K562 (cell line): ENCODE measurements at regions of chr17 and their contacts with region 1.

Region 1: DNA sequence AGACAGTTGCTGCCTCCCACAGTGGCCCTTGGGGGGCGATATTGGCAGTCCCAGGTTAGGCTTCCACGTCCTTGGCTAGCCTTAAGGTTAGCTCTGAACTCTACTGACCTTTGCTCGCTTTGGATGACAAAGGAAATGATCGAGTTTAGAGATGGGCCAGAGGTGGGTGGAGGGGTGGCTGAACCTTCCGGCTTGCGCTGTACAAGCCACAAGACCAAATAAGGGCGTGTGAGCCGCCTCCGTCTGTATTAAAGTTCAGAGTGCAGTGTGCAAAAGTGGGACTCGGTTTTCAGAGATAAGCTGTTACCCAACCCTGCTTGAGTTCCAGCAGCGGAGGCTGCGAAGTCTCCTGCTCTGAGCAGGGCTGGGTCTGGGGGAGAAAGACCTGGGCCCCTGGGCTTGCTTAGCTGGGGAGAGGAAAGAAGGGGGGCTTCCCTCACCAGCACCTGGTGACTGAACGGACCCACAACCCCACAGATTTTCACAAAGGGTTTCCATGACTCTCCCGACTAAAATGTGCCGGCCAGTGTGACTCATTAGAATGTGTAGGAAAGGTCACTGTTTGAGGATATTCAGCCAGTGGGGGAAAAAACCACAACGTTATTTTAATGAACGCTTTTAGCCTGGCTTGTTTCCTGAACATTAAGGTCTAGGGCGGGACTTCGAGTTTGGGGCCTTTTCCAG is 67.2 kb downstream of the CENPV start:
- DNase-seq: peak; percentile 85 to 95 (median 88)
- ATAC-seq: peak; percentile 96
- H3K4me3 ChIP-seq: peak overlapping the region; percentile 13; the same call in 1 of the 2 replicates
- H3K27ac ChIP-seq: peak overlapping the region; percentile 98
- H3K4me1 ChIP-seq: peaks cover 9 to 47% of the 10 kb centered on the region in 2 experiments
- H3K27me3 ChIP-seq: no peaks in the 10 kb centered on the region
- CTCF ChIP-seq: peak; percentile 78 to 80 (median 79)
- EP300 ChIP-seq: peak; percentile 73
- POLR2A ChIP-seq: peak; percentile 87
- RAD21 ChIP-seq: peak; percentile 51 to 74

Region 2: GRCh38 chr17:16215273-16215964 is 70.7 kb before region 1 on chr17 and contains the start of gene NCOR1:
- CTCF ChIA-PET with region 1: no interaction called
- POLR2A ChIA-PET with region 1: no interaction called
- in situ Hi-C with region 1: no loop called
- intact Hi-C with region 1: loop called (anchors 5 kb)
- DNase-seq: peak; percentile 71 to 92 (median 76)
- ATAC-seq: peak; percentile 90
- H3K4me3 ChIP-seq: peak within 1 kb of the TSS; percentile 97
- H3K27ac ChIP-seq: peak within 1 kb of the TSS; percentile 97
- H3K4me1 ChIP-seq: peaks cover 0 to 12% of the 10 kb centered on the region in 2 experiments; a peak in 2 of 5 replicates
- H3K27me3 ChIP-seq: no peaks in the 10 kb centered on the region
- CTCF ChIP-seq: peak; percentile 19 to 45 (median 43); a peak in 4 of 6 replicates
- EP300 ChIP-seq: no peak
- POLR2A ChIP-seq: peak; percentile 90
- RAD21 ChIP-seq: peak in 1 of 2 experiments; percentile 27; a peak in 2 of 4 replicates
- polyA plus RNA-seq, gene NCOR1: 20.2 to 35.3 TPM

Region 3: GRCh38 chr17:16353317-16354174 is 67.4 kb after region 1 on chr17 and contains the start of gene CENPV:
- CTCF ChIA-PET with region 1: no interaction called
- POLR2A ChIA-PET with region 1: interaction called, 3 read pairs
- in situ Hi-C with region 1: no loop called
- intact Hi-C with region 1: loop called (anchors 5 kb)
- DNase-seq: peak; percentile 65 to 82 (median 80)
- ATAC-seq: peak; percentile 74
- H3K4me3 ChIP-seq: peak within 1 kb of the TSS; percentile 93
- H3K27ac ChIP-seq: peak within 1 kb of the TSS; percentile 90
- H3K4me1 ChIP-seq: peaks cover 0 to 15% of the 10 kb centered on the region in 2 experiments; a peak in 4 of 5 replicates
- H3K27me3 ChIP-seq: no peaks in the 10 kb centered on the region
- CTCF ChIP-seq: peak in 2 of 3 experiments; percentile 28 to 47; a peak in 2 of 6 replicates
- EP300 ChIP-seq: no peak
- POLR2A ChIP-seq: no peak
- RAD21 ChIP-seq: no peak
- polyA plus RNA-seq, gene CENPV: 17.8 to 25.8 TPM

Region 4: GRCh38 chr17:16506188-16506587 is 220.1 kb after region 1 on chr17:
- CTCF ChIA-PET with region 1: no interaction called
- POLR2A ChIA-PET with region 1: no interaction called
- in situ Hi-C with region 1: no loop called
- intact Hi-C with region 1: no loop called
- DNase-seq: no peak
- ATAC-seq: no peak
- H3K4me3 ChIP-seq: no peak overlapping the region
- H3K27ac ChIP-seq: no peak overlapping the region
- H3K4me1 ChIP-seq: no peaks in the 10 kb centered on the region
- H3K27me3 ChIP-seq: peaks cover 3 to 34% of the 10 kb centered on the region in 2 experiments
- CTCF ChIP-seq: no peak
- EP300 ChIP-seq: no peak
- POLR2A ChIP-seq: no peak
- RAD21 ChIP-seq: no peak

Region 5: DNA sequence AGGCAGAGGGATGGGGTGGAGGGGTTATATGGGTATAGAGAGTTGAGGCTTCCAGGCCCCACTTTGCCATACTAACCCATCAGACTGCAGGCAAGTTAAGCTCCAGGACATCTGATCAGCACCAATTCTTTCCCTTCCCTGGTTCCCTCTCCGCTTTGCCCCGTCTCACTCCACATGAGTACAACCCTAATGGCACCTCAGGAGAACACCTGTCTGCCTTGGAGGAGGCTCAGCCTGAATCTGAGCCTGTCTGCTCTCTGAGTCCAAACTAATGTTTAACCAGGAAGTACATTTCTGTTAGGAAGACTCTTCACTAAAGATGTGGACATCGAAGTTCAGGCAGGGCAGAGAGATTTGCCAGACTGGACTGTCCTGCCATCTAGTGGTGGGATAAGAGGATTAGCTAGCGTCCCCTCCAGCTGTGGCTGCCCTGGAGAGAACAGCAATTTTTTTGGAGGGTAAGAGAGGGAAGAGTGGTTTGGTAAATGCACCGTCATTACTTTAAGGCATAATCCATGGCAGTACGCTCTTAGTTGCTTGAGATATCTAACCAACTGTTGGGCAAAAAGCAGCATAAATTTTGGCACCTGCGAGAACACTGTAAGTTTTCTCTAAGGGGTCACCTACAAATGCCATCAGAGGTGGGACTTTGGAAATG is 235.1 kb after region 1 on chr17:
- CTCF ChIA-PET with region 1: no interaction called
- POLR2A ChIA-PET with region 1: no interaction called
- in situ Hi-C with region 1: no loop called
- intact Hi-C with region 1: loop called (anchors 10 kb)
- DNase-seq: peak; percentile 72 to 82 (median 76)
- ATAC-seq: peak; percentile 98
- H3K4me3 ChIP-seq: no peak overlapping the region
- H3K27ac ChIP-seq: no peak overlapping the region
- H3K4me1 ChIP-seq: peaks cover 0 to 6% of the 10 kb centered on the region in 2 experiments; a peak in 3 of 5 replicates
- H3K27me3 ChIP-seq: no peaks in the 10 kb centered on the region
- CTCF ChIP-seq: peak; percentile 83 to 87 (median 84)
- EP300 ChIP-seq: no peak
- POLR2A ChIP-seq: no peak
- RAD21 ChIP-seq: peak; percentile 86 to 91